ENCODE measurements at regions of chr12 and their contacts with region 1.

Region 1: DNA sequence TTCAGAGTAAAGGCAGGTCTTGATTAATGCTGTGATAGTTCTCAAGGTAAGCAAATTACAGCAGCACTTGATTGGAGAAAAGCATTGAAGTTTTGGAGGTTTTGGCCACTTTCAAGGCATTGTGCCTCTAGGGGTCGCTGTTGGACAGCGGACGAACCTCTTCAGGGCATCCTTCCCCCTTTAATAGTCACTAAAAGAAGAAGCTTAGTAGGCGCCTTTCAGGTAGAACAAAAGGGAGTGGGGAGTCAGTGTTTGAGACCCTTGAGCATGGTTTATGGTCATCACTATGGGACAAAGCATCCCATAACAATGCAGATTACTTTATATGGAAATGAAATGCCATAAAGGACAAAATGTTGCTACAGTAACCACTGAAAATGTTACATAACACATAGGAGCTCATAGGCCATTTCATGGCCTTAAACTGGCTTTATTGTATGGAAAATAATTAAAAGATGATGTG is 199.5 kb upstream of the DCN start:
- DNase-seq: peak; percentile 62
- H3K4me3 ChIP-seq: peak overlapping the region; percentile 61
- H3K27ac ChIP-seq: no peak overlapping the region
- H3K27me3 ChIP-seq: no peaks in the 10 kb centered on the region
- CTCF ChIP-seq: peak; percentile 94

Region 2: GRCh38 chr12:91400271-91400670 is 18.2 kb after region 1 on chr12:
- CTCF ChIA-PET with region 1: interaction called, 23 read pairs
- POLR2A ChIA-PET with region 1: no interaction called
- DNase-seq: no peak
- H3K4me3 ChIP-seq: no peak overlapping the region
- H3K27ac ChIP-seq: no peak overlapping the region
- H3K27me3 ChIP-seq: no peaks in the 10 kb centered on the region
- CTCF ChIP-seq: no peak

Region 3: DNA sequence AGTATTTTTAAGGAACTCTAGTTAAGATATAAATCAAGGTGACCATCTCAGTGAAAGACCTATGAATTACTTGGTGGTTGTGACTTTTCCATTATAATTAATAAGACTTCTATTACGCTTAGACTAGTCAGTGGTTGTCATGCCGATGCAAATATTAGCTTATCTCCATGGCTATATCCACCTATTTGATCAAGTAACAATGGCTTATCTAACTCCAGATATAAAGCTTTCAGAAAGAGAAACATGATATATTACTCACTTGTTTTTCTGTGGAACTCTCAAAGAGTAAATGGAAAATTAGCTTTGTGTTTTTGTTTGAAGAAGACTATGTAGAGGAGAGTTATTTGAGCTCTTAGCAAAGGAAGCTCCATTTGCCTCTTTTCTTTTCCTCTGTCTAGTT is 124.3 kb after region 1 on chr12:
- CTCF ChIA-PET with region 1: no interaction called
- POLR2A ChIA-PET with region 1: no interaction called
- DNase-seq: no peak
- H3K4me3 ChIP-seq: no peak overlapping the region
- H3K27ac ChIP-seq: no peak overlapping the region
- H3K27me3 ChIP-seq: no peaks in the 10 kb centered on the region
- CTCF ChIP-seq: no peak

Region 4: DNA sequence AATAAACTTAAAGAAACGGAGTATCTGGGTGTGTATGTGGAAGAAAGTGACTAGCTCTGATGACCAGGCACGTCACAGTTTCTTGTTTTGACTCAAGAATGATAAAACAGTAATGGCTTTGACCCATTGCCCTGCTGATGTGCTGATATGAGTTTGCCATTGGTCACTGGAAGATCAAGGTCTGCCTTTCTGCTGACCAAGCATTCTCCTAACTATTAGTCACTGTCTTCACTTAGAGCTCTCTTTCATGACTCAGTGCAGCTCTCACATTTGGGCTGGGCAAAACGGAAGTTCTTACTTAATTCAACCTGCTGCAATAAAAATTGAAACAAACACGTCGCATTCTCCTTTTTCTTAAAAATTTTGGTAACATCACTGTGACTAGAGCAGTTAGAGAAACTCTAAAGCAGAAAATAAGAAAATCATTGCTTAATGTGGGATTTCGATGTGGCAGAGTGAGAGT is 396.9 kb after region 1 on chr12:
- CTCF ChIA-PET with region 1: interaction called, 11 read pairs
- POLR2A ChIA-PET with region 1: no interaction called
- DNase-seq: peak; percentile 33
- H3K4me3 ChIP-seq: no peak overlapping the region
- H3K27ac ChIP-seq: no peak overlapping the region
- H3K27me3 ChIP-seq: no peaks in the 10 kb centered on the region
- CTCF ChIP-seq: no peak

Region 5: DNA sequence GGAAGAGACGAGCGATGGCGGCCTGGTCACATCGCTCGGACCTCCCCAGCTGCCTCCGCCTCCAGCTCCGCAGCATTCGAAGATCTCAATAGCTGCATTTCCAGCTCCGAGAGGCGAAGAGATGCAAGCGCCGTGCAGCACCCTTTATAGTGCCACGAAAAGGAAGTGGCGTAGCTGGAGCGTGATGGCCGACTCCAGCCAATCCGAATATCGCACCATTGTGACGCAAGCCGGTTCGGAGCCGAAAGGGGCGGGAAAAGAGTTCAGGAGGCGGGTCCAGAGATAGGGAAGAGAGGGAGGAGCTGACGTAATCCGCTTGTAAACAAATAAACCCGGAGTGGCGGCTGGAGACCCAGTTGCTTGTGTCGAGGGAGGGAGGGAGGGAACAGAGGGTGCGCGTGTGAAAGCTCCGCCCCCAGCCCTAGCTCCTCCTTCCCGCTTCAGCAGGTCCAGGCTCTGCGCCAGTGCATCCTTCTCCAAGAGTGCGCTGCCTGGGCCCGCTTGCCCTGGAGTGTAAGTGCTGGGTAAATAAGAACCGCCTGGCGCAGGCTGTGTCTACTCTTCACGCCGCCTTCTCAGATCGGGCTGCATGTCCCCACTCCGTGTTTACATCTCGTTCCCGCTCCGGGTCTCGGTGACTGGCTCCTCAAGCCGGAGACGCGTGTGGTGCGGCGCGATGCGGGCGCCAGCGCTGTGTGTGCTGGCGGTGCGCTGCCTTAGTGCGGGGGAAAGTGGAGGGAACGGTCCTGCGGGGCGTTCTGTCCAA is 763.8 kb after region 1 on chr12 and contains the start of gene BTG1:
- CTCF ChIA-PET with region 1: interaction called, 57 read pairs
- POLR2A ChIA-PET with region 1: interaction called, 51 read pairs
- DNase-seq: peak; percentile 100
- H3K4me3 ChIP-seq: peak within 1 kb of the TSS; percentile 98
- H3K27ac ChIP-seq: peak within 1 kb of the TSS; percentile 95
- H3K27me3 ChIP-seq: no peaks in the 10 kb centered on the region
- CTCF ChIP-seq: no peak
- polyA plus RNA-seq, gene BTG1: 88.8 and 89.7 TPM in 2 replicates

Region 6: GRCh38 chr12:92570056-92570753 is 1188.1 kb after region 1 on chr12:
- CTCF ChIA-PET with region 1: interaction called, 18 read pairs
- POLR2A ChIA-PET with region 1: no interaction called
- DNase-seq: peak; percentile 77
- H3K4me3 ChIP-seq: no peak overlapping the region
- H3K27ac ChIP-seq: no peak overlapping the region
- H3K27me3 ChIP-seq: no peaks in the 10 kb centered on the region
- CTCF ChIP-seq: peak; percentile 79

Region 7: GRCh38 chr12:92649511-92650227 is 1267.6 kb after region 1 on chr12:
- CTCF ChIA-PET with region 1: interaction called, 47 read pairs
- POLR2A ChIA-PET with region 1: no interaction called
- DNase-seq: peak; percentile 76
- H3K4me3 ChIP-seq: no peak overlapping the region
- H3K27ac ChIP-seq: no peak overlapping the region
- H3K27me3 ChIP-seq: peaks cover 2% of the 10 kb centered on the region
- CTCF ChIP-seq: peak; percentile 84

Measured in AG04450 (cell line).